ENCODE measurements at regions of chr4 and their contacts with region 1.

Region 1: DNA sequence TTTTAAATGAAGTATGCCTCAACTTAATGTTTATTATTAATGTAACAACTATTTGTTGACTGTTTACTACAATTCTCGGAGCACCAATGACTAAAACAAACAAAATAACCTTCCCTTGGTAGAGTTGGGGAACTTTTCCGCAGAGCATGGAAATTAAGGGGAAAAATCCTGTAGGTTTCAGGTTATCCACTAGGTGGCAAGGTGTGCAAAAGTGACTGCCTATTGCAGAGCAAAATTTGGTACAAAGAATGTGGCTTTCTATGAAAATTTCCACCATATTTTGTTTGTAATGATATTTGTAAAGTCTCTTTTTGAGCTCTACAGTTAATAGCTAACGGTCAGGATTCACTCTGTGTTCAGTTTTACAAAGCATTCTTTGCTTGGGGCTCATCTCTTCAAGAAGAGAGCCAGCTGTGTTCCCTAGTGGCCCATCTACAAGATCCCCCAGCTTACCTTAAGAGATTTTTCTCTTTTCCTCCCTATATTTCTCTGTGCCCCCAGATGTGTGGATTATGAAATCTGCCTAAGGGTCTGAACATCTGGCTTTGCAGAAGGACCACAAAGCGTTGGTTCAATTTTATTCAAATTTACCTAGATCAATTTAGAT is 61.1 kb downstream of the FBXO8 start:
- DNase-seq: no peak
- ATAC-seq: peak; percentile 69
- H3K4me3 ChIP-seq: no peak overlapping the region
- H3K27ac ChIP-seq: no peak overlapping the region
- H3K4me1 ChIP-seq: peaks cover 8 to 13% of the 10 kb centered on the region in 2 donors
- H3K27me3 ChIP-seq: peaks cover 30 to 62% of the 10 kb centered on the region in 2 donors
- CTCF ChIP-seq: peak; percentile 37 to 45

Region 2: GRCh38 chr4:173845580-173845979 is 376.8 kb before region 1 on chr4:
- intact Hi-C with region 1: no loop called
- DNase-seq: no peak
- ATAC-seq: no peak
- H3K4me3 ChIP-seq: no peak overlapping the region
- H3K27ac ChIP-seq: no peak overlapping the region
- H3K4me1 ChIP-seq: no peaks in the 10 kb centered on the region
- H3K27me3 ChIP-seq: no peaks in the 10 kb centered on the region
- CTCF ChIP-seq: no peak

Region 3: GRCh38 chr4:174318829-174319764 is 96.7 kb after region 1 on chr4:
- intact Hi-C with region 1: loop called in 1 of 2 experiments (anchors 10 kb)
- DNase-seq: peak in 2 of 4 donors; percentile 13 to 18
- ATAC-seq: no peak
- H3K4me3 ChIP-seq: no peak overlapping the region
- H3K27ac ChIP-seq: no peak overlapping the region
- H3K4me1 ChIP-seq: no peaks in the 10 kb centered on the region
- H3K27me3 ChIP-seq: no peaks in the 10 kb centered on the region
- CTCF ChIP-seq: peak; percentile 50 to 72

Measured in left lung (tissue), 14 donors.